ENCODE measurements at regions of chr9 and their contacts with region 1.

Region 1: DNA sequence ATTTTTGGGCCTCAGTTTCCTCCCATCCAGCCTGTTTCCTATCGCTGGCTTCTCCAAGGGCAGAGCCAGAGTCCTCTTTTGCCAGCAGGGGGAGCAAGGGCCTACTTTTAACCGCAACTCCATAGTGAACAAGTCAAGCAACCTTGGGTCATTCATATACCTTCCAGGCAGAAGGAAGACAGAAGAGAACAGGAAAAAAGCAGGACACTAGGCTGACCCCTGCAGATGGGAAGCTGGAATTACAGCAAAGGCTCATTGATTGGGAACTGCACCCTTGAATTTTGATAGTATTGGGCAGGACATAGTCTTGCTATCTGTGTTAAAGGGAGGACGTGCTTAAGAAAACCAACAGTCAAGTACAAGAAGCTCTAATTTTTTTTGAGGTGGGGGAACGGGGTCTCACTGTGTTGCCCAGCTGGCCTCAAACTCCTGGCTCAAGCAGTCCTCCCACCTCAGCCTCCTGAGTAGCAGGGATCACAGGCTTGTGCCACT is 30.1 kb downstream of the QRFP start:
- H3K4me3 ChIP-seq: peak overlapping the region; percentile 7; the same call in 1 of the 2 replicates
- H3K27ac ChIP-seq: no peak overlapping the region
- H3K4me1 ChIP-seq: no peaks in the 10 kb centered on the region
- CTCF ChIP-seq: peak; percentile 85

Region 2: GRCh38 chr9:130498298-130498917 is 368.1 kb before region 1 on chr9:
- CTCF ChIA-PET with region 1: no interaction called
- POLR2A ChIA-PET with region 1: no interaction called
- H3K4me3 ChIP-seq: no peak overlapping the region
- H3K27ac ChIP-seq: no peak overlapping the region
- H3K4me1 ChIP-seq: peaks cover 4% of the 10 kb centered on the region; the same call in 1 of the 2 replicates
- CTCF ChIP-seq: no peak

Region 3: DNA sequence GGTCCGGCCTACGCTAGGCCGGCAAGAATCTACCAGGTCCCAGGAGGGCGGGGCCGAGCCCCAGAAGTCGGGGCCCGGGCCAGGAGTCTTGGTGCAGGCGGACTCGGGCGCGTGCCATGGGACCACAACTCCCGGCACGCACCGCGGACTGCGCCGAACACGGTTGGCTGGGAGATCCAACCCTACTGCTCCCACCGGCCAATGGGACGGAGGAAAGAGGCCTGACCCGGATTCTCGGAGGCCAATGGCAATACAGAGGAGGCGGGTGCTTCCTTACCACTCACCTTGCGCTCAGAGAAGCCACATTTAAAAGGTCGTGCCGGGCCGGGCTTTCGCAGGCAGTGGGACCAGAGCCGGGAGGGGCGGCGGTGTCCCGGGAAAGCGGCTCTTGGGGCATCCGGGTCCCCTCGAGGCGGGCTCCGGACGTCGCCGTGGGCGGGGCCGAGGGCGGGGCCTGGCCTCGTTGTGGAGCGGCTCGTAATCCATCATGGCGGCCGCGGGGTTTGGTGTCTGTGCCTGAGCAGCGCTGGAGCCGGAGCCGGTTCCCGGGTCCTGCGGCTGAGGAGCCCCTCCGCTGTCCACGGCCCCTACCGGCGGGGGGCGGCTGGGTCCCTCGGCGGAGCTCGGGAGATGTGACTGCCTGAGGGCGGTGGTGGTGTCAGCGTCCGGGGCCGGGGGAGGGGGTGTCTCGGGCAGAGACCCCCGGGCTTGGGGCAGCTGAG is 153.8 kb before region 1 on chr9:
- CTCF ChIA-PET with region 1: interaction called, 400 read pairs
- POLR2A ChIA-PET with region 1: interaction called, 5 read pairs
- H3K4me3 ChIP-seq: peak overlapping the region; percentile 96
- H3K27ac ChIP-seq: peak overlapping the region; percentile 88
- H3K4me1 ChIP-seq: no peaks in the 10 kb centered on the region
- CTCF ChIP-seq: no peak

Region 4: GRCh38 chr9:130770679-130771442 is 95.7 kb before region 1 on chr9:
- CTCF ChIA-PET with region 1: interaction called, 365 read pairs
- POLR2A ChIA-PET with region 1: no interaction called
- H3K4me3 ChIP-seq: no peak overlapping the region
- H3K27ac ChIP-seq: no peak overlapping the region
- H3K4me1 ChIP-seq: no peaks in the 10 kb centered on the region
- CTCF ChIP-seq: peak; percentile 39; the same call in 1 of the 2 replicates

Region 5: GRCh38 chr9:130842545-130842944 is 24.0 kb before region 1 on chr9:
- CTCF ChIA-PET with region 1: interaction called, 57 read pairs
- POLR2A ChIA-PET with region 1: interaction called, 9 read pairs
- H3K4me3 ChIP-seq: no peak overlapping the region
- H3K27ac ChIP-seq: no peak overlapping the region
- H3K4me1 ChIP-seq: no peaks in the 10 kb centered on the region; the same call in 1 of the 2 replicates
- CTCF ChIP-seq: no peak

Region 6: DNA sequence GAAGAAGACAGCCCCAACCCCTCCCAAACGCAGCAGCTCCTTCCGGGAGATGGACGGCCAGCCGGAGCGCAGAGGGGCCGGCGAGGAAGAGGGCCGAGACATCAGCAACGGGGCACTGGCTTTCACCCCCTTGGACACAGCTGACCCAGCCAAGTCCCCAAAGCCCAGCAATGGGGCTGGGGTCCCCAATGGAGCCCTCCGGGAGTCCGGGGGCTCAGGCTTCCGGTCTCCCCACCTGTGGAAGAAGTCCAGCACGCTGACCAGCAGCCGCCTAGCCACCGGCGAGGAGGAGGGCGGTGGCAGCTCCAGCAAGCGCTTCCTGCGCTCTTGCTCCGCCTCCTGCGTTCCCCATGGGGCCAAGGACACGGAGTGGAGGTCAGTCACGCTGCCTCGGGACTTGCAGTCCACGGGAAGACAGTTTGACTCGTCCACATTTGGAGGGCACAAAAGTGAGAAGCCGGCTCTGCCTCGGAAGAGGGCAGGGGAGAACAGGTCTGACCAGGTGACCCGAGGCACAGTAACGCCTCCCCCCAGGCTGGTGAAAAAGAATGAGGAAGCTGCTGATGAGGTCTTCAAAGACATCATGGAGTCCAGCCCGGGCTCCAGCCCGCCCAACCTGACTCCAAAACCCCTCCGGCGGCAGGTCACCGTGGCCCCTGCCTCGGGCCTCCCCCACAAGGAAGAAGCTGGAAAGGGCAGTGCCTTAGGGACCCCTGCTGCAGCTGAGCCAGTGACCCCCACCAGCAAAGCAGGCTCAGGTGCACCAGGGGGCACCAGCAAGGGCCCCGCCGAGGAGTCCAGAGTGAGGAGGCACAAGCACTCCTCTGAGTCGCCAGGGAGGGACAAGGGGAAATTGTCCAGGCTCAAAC is 17.8 kb after region 1 on chr9:
- CTCF ChIA-PET with region 1: interaction called, 85 read pairs
- POLR2A ChIA-PET with region 1: interaction called, 3 read pairs
- H3K4me3 ChIP-seq: no peak overlapping the region
- H3K27ac ChIP-seq: no peak overlapping the region
- H3K4me1 ChIP-seq: no peaks in the 10 kb centered on the region
- CTCF ChIP-seq: no peak

Region 7: GRCh38 chr9:130940693-130941576 is 74.4 kb after region 1 on chr9:
- CTCF ChIA-PET with region 1: interaction called, 49 read pairs
- POLR2A ChIA-PET with region 1: no interaction called
- H3K4me3 ChIP-seq: no peak overlapping the region
- H3K27ac ChIP-seq: no peak overlapping the region
- H3K4me1 ChIP-seq: no peaks in the 10 kb centered on the region
- CTCF ChIP-seq: peak; percentile 93

Region 8: GRCh38 chr9:131046581-131047202 is 180.2 kb after region 1 on chr9:
- CTCF ChIA-PET with region 1: interaction called, 50 read pairs
- POLR2A ChIA-PET with region 1: interaction called, 3 read pairs
- H3K4me3 ChIP-seq: no peak overlapping the region
- H3K27ac ChIP-seq: no peak overlapping the region
- H3K4me1 ChIP-seq: no peaks in the 10 kb centered on the region
- CTCF ChIP-seq: peak; percentile 90